H1 (cell line): ENCODE measurements at regions of chr7 and their contacts with region 1.

Region 1: DNA sequence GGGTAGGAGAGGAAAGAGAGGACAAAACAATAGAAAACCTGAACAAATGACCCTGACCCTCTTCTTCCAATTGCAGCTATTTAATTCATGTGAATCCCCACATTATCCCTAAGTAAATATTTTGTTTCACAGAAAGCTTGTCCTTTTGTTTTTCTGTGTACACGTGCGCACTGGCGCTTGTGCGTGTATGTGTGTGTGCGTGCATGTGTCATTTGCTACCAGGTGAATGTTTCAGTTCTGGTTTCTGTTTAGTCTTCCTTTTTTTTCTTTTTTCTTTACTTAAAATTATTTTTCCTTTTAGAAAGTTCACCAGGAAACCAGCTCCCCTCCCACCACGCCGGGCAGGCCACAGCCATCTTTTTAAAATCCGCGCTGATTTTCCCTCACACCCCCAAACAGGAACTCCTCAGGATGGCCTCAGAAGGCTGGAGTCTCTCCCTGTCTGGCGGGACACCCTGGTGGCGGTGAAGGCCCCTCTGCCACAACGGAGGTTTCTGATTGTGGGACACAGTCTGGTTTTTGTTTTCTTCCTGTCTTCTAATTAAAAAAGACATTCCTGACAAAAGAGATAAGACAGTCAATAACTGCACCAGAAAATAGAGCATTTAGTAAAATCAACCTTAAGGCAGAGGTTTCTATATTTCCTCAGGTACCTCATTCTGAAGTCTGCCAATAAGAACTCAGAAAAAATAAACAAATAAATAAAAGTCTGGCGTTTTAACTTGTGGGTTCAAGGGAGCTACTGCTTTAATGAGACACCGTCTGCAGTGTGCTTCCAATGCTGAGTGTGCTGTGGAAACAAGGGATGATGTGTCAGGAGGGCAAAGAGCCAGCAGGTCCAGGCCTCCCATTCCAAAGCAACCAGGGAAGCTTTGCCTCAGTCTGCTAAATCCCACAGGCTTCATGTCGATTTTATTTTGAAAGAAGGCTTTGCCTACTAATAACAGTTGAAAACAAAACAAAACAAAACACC is 17.4 kb downstream of the IRF5 start:
- DNase-seq: no peak
- H3K4me3 ChIP-seq: 0 out of 8 replicates have a peak overlapping the region, but pooled peaks of 1 of the 4 experiments have one; percentile 10
- H3K27ac ChIP-seq: no peak overlapping the region
- H3K4me1 ChIP-seq: peaks cover 0 to 2% (median 0%) of the 10 kb centered on the region in 4 experiments; a peak in 1 of 7 replicates
- H3K27me3 ChIP-seq: no peaks in the 10 kb centered on the region
- CTCF ChIP-seq: peak in 2 of 3 experiments; percentile 37 to 38; a peak in 2 of 4 replicates
- EP300 ChIP-seq: no peak
- POLR2A ChIP-seq: no peak
- RAD21 ChIP-seq: peak; percentile 47 to 63

Region 2: DNA sequence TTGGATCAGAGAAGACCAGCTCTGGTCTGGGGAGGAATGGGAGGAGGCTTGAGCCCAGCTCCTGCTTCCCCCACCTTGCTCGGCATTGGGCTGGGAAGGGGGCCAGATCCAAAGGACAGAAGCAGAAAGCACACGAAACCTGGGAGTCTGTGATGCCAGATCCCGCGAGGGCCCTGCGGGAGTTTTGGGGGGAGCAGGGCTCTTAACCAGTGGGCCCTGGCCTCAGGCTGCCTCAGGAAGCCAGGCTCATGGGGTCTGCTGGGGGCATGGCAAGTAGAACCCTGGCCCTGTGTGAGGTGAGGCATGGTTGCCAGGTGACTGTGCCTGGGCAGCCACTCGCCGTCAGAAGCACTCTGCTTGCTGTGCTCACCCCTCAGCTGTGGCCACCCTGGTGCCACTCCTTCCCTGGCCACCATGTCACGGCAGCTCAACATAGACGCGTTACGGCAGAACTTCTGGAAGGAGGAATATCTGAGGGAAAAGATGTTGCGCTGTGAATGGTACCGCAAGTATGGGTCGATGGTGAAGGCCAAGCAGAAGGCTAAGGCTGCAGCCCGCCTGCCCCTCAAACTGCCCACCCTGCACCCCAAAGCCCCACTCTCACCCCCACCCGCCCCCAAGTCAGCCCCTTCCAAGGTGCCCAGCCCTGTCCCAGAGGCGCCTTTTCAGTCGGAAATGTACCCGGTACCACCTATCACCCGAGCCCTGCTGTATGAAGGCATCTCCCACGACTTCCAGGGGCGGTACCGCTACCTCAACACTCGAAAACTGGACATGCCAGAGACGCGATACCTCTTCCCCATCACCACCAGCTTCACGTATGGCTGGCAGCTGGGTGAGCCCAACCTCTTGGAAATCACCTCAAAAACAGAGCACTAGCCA is 88.9 kb before region 1 on chr7:
- CTCF ChIA-PET with region 1: no interaction called
- POLR2A ChIA-PET with region 1: no interaction called
- DNase-seq: no peak
- H3K4me3 ChIP-seq: no peak overlapping the region
- H3K27ac ChIP-seq: no peak overlapping the region
- H3K4me1 ChIP-seq: peaks cover 0 to 21% (median 12%) of the 10 kb centered on the region in 4 experiments; a peak in 6 of 7 replicates
- H3K27me3 ChIP-seq: peaks cover 5 to 36% (median 32%) of the 10 kb centered on the region in 4 experiments
- CTCF ChIP-seq: no peak
- EP300 ChIP-seq: no peak
- POLR2A ChIP-seq: no peak
- RAD21 ChIP-seq: no peak

Region 3: GRCh38 chr7:128909625-128910257 is 45.4 kb before region 1 on chr7:
- CTCF ChIA-PET with region 1: interaction called, 42 read pairs
- POLR2A ChIA-PET with region 1: interaction called, 5 read pairs
- DNase-seq: peak in 1 of 2 experiments; percentile 71
- H3K4me3 ChIP-seq: peak overlapping the region; percentile 37 to 67 (median 52)
- H3K27ac ChIP-seq: no peak overlapping the region
- H3K4me1 ChIP-seq: peaks cover 4 to 35% (median 20%) of the 10 kb centered on the region in 4 experiments
- H3K27me3 ChIP-seq: peaks cover 12 to 52% (median 37%) of the 10 kb centered on the region in 4 experiments
- CTCF ChIP-seq: no peak
- EP300 ChIP-seq: no peak
- POLR2A ChIP-seq: no peak
- RAD21 ChIP-seq: no peak